IMR-90 (cell line): ENCODE measurements at regions of chr1 and their contacts with region 1.

Region 1: GRCh38 chr1:32215629-32216480 is 6.3 kb downstream of the TMEM234 start:
- DNase-seq: peak; percentile 66
- ATAC-seq: peak; percentile 97
- H3K4me3 ChIP-seq: no peak overlapping the region
- H3K27ac ChIP-seq: no peak overlapping the region
- H3K4me1 ChIP-seq: peaks cover 3% of the 10 kb centered on the region; the same call in 1 of the 2 replicates
- H3K27me3 ChIP-seq: no peaks in the 10 kb centered on the region
- CTCF ChIP-seq: peak; percentile 83
- POLR2A ChIP-seq: no peak
- RAD21 ChIP-seq: peak; percentile 91

Region 2: GRCh38 chr1:32232558-32233304 is 16.9 kb after region 1 on chr1:
- CTCF ChIA-PET with region 1: no interaction called
- POLR2A ChIA-PET with region 1: no interaction called
- dilution Hi-C with region 1: no loop called
- in situ Hi-C with region 1: no loop called
- intact Hi-C with region 1: no loop called
- DNase-seq: no peak
- ATAC-seq: no peak
- H3K4me3 ChIP-seq: no peak overlapping the region
- H3K27ac ChIP-seq: no peak overlapping the region
- H3K4me1 ChIP-seq: peaks cover 12% of the 10 kb centered on the region
- H3K27me3 ChIP-seq: no peaks in the 10 kb centered on the region
- CTCF ChIP-seq: no peak
- POLR2A ChIP-seq: no peak
- RAD21 ChIP-seq: no peak

Region 3: GRCh38 chr1:32321712-32322291 is 105.9 kb after region 1 on chr1:
- CTCF ChIA-PET with region 1: interaction called, 4 read pairs
- POLR2A ChIA-PET with region 1: interaction called, 7 read pairs
- dilution Hi-C with region 1: no loop called
- in situ Hi-C with region 1: loop called (anchors 10 kb)
- intact Hi-C with region 1: no loop called
- DNase-seq: no peak
- ATAC-seq: peak; percentile 71
- H3K4me3 ChIP-seq: no peak overlapping the region
- H3K27ac ChIP-seq: peak overlapping the region; percentile 11; the same call in 1 of the 2 replicates
- H3K4me1 ChIP-seq: peaks cover 4% of the 10 kb centered on the region
- H3K27me3 ChIP-seq: no peaks in the 10 kb centered on the region
- CTCF ChIP-seq: no peak
- POLR2A ChIP-seq: no peak
- RAD21 ChIP-seq: no peak

Region 4: DNA sequence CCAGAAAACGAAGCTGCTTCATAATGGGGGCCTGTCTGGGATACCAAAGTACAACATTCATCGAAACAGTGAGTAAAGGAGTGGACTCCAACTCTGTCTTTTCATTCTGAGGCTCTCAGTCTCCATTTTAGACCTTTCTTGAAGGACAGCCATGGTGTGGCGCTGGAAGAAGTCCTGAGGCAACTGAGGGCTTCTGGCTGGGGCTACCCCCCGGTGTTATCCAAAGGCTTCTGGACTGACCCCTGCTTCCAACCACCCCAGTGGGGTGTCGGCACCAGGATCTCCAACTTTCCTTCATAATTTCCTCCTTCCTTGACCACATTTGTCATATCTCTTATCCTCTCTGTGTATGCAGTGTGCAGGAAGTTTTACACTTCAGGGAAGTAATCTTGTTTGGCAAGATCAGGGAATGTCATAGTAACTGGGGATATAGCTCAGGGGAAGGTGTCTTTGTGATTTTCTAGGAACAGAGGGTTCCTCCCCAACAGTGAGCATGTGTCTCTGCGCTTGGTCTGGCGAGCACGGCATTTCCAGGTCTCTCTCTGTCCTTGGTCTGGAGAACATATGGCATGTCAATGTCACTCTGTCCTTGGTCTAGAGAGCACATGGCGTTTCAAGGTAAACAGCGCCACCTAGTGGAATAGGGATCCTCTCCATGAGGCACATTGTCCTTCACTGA is 197.8 kb after region 1 on chr1:
- CTCF ChIA-PET with region 1: no interaction called
- POLR2A ChIA-PET with region 1: no interaction called
- dilution Hi-C with region 1: no loop called
- in situ Hi-C with region 1: no loop called
- intact Hi-C with region 1: loop called (anchors 1 kb)
- DNase-seq: peak; percentile 68
- ATAC-seq: peak; percentile 87
- H3K4me3 ChIP-seq: no peak overlapping the region
- H3K27ac ChIP-seq: no peak overlapping the region
- H3K4me1 ChIP-seq: no peaks in the 10 kb centered on the region
- H3K27me3 ChIP-seq: peaks cover 6% of the 10 kb centered on the region
- CTCF ChIP-seq: peak; percentile 77
- POLR2A ChIP-seq: no peak
- RAD21 ChIP-seq: peak; percentile 87

Region 5: GRCh38 chr1:33433509-33434362 is 1217.9 kb after region 1 on chr1:
- CTCF ChIA-PET with region 1: no interaction called
- POLR2A ChIA-PET with region 1: no interaction called
- dilution Hi-C with region 1: no loop called
- in situ Hi-C with region 1: no loop called
- intact Hi-C with region 1: no loop called
- DNase-seq: peak; percentile 99
- ATAC-seq: peak; percentile 43
- H3K4me3 ChIP-seq: no peak overlapping the region
- H3K27ac ChIP-seq: peak overlapping the region; percentile 20
- H3K4me1 ChIP-seq: peaks cover 13% of the 10 kb centered on the region
- H3K27me3 ChIP-seq: no peaks in the 10 kb centered on the region
- CTCF ChIP-seq: no peak
- POLR2A ChIP-seq: no peak
- RAD21 ChIP-seq: peak; percentile 16; the same call in 1 of the 2 replicates